ENCODE measurements at regions of chr16 and their contacts with region 1.

Region 1: GRCh38 chr16:55465077-55465896 is 13.7 kb upstream of the MMP2 start:
- DNase-seq: peak; percentile 83
- H3K4me3 ChIP-seq: no peak overlapping the region
- H3K27ac ChIP-seq: no peak overlapping the region
- H3K4me1 ChIP-seq: peaks cover under 1% of the 10 kb centered on the region
- H3K27me3 ChIP-seq: peaks cover 0 to 6% of the 10 kb centered on the region in 2 experiments
- CTCF ChIP-seq: peak; percentile 98 to 99
- POLR2A ChIP-seq: no peak

Region 2: DNA sequence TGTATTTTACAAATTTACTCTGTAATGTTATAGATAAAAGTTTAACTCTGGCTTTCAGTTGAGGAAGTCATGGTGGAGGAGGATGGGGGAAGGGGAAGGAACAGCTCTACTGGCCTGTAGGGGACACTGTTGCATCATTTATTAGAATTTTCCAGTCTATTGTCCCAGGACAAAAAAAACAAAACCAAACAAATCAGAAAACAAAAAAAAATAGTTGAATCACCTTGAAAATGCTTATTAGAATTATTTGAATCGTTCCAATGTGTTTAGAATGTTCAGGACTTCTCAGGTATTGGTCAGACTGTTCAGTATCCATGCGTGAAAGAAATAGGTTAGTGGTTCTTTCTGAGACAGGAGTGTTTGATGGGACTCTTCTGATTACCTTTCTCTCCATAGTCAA is 1519.3 kb before region 1 on chr16:
- CTCF ChIA-PET with region 1: interaction called, 17 read pairs
- POLR2A ChIA-PET with region 1: no interaction called
- dilution Hi-C with region 1: no loop called
- intact Hi-C with region 1: loop called (anchors 1 kb)
- DNase-seq: peak; percentile 58
- H3K4me3 ChIP-seq: no peak overlapping the region
- H3K27ac ChIP-seq: no peak overlapping the region
- H3K4me1 ChIP-seq: no peaks in the 10 kb centered on the region
- H3K27me3 ChIP-seq: no peaks in the 10 kb centered on the region
- CTCF ChIP-seq: peak; percentile 55 to 69
- POLR2A ChIP-seq: no peak

Region 3: DNA sequence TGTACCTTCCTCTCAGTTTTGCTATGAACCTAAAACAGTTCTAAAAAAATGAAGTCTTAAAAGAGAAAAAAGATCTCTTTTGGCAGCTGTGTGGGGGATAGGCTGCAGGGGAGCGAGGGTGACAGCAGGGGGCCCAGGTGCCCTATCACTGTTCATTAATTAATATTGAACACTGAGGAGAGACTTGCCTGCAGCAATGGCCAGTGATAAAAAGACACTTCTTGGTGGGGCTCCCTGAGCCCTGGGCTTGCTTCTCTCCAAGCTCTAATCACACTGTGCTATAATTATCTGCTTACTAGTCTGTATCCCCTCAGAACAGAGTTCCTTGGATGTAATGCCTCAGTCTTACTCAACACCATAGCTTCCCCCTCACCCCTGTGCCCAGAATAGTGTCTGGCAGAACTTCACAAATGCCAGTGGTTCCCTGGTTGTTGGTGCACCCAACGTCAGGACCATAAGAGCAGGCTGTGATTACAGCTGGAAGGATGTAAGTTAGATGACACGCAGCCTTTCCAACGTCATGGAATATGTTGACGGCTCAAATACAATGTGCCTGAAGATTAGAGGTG is 193.3 kb before region 1 on chr16:
- CTCF ChIA-PET with region 1: no interaction called
- POLR2A ChIA-PET with region 1: no interaction called
- dilution Hi-C with region 1: no loop called
- intact Hi-C with region 1: no loop called
- DNase-seq: no peak
- H3K4me3 ChIP-seq: no peak overlapping the region
- H3K27ac ChIP-seq: no peak overlapping the region
- H3K4me1 ChIP-seq: no peaks in the 10 kb centered on the region
- H3K27me3 ChIP-seq: no peaks in the 10 kb centered on the region
- CTCF ChIP-seq: no peak
- POLR2A ChIP-seq: no peak

Region 4: DNA sequence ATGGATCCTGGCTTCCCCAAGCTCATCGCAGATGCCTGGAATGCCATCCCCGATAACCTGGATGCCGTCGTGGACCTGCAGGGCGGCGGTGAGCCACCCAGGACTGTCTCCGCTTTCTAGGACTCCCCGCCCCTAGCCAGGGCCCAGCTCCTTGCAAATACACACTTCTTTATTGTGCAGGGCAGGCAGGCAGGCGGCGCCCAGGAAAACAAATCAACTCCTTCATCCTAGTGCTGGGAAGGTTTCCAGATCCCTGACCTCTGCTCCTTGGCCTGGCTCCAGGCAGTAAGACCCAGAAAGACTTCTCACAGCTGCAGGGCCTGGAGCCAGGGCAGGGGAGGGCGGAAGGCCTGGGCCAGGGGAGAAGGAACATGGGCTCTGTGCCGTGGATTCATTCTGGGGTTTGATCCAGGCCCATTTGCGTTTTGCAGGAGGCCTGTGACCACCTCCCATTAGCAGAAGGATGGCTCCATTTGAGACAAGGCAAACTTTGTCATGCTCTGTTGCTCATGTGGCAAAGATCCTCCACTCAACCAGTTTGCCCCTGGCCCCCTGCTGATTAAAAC is 37.6 kb after region 1 on chr16:
- CTCF ChIA-PET with region 1: interaction called, 34 read pairs
- POLR2A ChIA-PET with region 1: no interaction called
- dilution Hi-C with region 1: no loop called
- intact Hi-C with region 1: loop called (anchors 1 kb)
- DNase-seq: peak; percentile 76
- H3K4me3 ChIP-seq: no peak overlapping the region
- H3K27ac ChIP-seq: peak overlapping the region; percentile 95
- H3K4me1 ChIP-seq: peaks cover 58% of the 10 kb centered on the region
- H3K27me3 ChIP-seq: no peaks in the 10 kb centered on the region
- CTCF ChIP-seq: no peak
- POLR2A ChIP-seq: peak; percentile 37

Region 5: GRCh38 chr16:55543472-55543871 is 78.2 kb after region 1 on chr16:
- CTCF ChIA-PET with region 1: interaction called, 40 read pairs
- POLR2A ChIA-PET with region 1: no interaction called
- dilution Hi-C with region 1: no loop called
- intact Hi-C with region 1: loop called (anchors 1 kb)
- DNase-seq: peak; percentile 47
- H3K4me3 ChIP-seq: no peak overlapping the region
- H3K27ac ChIP-seq: no peak overlapping the region
- H3K4me1 ChIP-seq: peaks cover 19% of the 10 kb centered on the region
- H3K27me3 ChIP-seq: no peaks in the 10 kb centered on the region
- CTCF ChIP-seq: no peak
- POLR2A ChIP-seq: no peak

Region 6: GRCh38 chr16:55592306-55592705 is 127.0 kb after region 1 on chr16:
- CTCF ChIA-PET with region 1: no interaction called
- POLR2A ChIA-PET with region 1: no interaction called
- dilution Hi-C with region 1: no loop called
- intact Hi-C with region 1: no loop called
- DNase-seq: no peak
- H3K4me3 ChIP-seq: no peak overlapping the region
- H3K27ac ChIP-seq: no peak overlapping the region
- H3K4me1 ChIP-seq: no peaks in the 10 kb centered on the region
- H3K27me3 ChIP-seq: no peaks in the 10 kb centered on the region
- CTCF ChIP-seq: no peak
- POLR2A ChIP-seq: no peak

Region 7: DNA sequence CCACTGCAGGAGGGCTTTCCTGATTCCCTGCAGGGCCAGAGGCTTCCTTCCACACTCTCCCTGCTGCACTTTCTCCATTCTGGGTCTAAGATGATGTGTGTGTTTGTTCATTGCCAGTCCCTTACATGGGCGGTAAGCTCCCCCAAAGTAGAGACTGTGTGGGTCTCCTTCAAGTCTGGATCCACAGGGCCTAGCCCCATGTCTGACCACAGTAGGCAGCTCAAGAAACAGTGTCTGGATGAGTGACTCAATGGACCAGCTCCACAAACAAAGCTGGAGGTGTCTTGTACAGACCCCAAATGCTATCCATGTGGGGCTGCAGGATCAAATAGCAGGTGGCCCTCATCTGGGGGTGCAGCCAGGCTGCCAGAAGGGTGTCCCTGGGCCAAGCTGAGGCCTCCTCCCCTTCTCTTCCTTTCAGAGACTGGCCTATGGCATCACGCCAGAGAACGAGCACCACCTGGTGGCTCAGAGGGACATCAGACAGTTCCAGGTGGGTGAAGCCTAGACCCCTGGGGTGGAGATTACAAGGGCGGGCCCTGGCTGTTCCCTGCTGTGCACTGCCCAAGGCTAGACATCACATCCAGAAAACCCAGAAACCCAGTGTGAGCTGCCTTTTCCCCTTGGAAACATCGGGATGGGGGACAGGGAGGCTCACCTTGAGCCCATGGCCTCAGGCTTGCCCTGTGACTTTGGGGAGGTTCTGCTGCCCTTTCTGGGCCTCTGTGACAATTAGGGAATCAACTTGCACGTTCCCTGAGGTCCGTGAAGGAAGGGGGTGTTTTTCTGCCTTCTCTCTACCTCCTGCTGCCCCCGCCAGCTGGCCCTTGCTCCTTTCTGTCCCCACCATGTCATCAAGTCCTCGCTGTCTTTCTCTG is 236.4 kb after region 1 on chr16:
- CTCF ChIA-PET with region 1: interaction called, 408 read pairs
- POLR2A ChIA-PET with region 1: interaction called, 5 read pairs
- dilution Hi-C with region 1: no loop called
- intact Hi-C with region 1: loop called (anchors 1 kb)
- DNase-seq: peak; percentile 49
- H3K4me3 ChIP-seq: no peak overlapping the region
- H3K27ac ChIP-seq: no peak overlapping the region
- H3K4me1 ChIP-seq: peaks cover 8% of the 10 kb centered on the region
- H3K27me3 ChIP-seq: peaks cover 7 to 8% of the 10 kb centered on the region in 2 experiments
- CTCF ChIP-seq: peak; percentile 65 to 69
- POLR2A ChIP-seq: no peak